ENCODE measurements at regions of chr16 and their contacts with region 1.

Region 1: DNA sequence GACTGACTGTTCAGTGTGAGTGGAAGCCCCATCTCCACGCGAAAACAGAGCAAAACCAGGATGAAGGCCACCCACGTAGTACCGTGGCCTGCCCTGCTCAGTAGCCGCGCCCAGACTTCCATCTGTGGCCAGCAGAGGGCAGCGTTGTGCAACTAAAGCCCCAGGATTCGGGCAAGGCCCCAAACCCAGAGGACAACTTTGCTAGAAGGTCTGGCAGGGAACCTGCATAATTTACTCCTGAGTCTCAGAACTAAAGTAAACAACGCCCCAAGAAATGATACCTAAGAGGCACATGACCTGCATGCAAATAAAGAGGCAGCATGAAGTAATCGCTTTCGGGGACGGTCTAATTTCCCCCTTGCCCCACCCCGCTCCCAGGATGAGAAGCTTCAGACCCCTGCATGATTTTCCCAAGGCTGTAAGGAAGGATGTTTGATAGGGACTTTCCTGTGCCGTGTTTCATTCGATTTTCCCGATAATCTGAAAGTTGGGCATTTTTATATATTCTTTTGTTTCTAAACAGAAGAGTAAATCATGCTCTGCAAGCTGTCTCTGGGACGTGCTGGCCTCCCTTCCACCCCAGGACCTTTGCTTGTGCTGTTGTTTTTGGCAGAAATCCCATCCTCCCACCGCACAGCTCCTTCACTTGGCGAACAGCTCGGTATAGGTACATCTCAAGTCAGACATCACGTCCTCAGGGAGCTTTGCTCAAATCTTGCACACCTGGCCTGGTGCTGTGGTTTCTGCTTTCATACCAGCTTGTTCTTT is 18.6 kb downstream of the HSBP1 start:
- DNase-seq: peak; percentile 84 to 94
- ATAC-seq: peak; percentile 92 to 99 (median 96)
- H3K4me3 ChIP-seq: no peak overlapping the region
- H3K27ac ChIP-seq: peak overlapping the region; percentile 38
- H3K4me1 ChIP-seq: no peaks in the 10 kb centered on the region
- H3K27me3 ChIP-seq: no peaks in the 10 kb centered on the region
- CTCF ChIP-seq: peak; percentile 97

Region 2: DNA sequence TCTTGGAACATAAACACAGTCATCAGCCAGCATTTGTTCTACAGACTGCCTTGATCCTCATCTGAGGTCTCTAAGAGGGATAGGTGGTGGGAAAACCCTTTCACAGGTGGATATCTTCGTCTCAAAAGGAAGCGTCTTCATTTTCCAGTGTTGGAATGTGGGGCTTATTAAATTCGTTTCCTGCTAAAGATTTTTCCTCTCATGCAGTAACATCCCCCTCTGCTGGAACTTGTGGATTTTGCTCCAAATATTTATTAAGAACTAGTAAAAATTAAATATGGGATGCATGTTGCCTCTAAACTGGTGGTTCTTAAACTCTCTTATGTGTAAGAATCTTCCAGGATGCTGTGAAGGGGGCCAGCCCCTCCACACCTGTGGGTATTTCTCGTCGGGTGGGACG is 52.5 kb after region 1 on chr16:
- intact Hi-C with region 1: loop called in 1 of 2 experiments (anchors 1 kb)
- DNase-seq: no peak
- ATAC-seq: no peak
- H3K4me3 ChIP-seq: no peak overlapping the region
- H3K27ac ChIP-seq: no peak overlapping the region
- H3K4me1 ChIP-seq: no peaks in the 10 kb centered on the region
- H3K27me3 ChIP-seq: no peaks in the 10 kb centered on the region
- CTCF ChIP-seq: peak; percentile 32

Region 3: DNA sequence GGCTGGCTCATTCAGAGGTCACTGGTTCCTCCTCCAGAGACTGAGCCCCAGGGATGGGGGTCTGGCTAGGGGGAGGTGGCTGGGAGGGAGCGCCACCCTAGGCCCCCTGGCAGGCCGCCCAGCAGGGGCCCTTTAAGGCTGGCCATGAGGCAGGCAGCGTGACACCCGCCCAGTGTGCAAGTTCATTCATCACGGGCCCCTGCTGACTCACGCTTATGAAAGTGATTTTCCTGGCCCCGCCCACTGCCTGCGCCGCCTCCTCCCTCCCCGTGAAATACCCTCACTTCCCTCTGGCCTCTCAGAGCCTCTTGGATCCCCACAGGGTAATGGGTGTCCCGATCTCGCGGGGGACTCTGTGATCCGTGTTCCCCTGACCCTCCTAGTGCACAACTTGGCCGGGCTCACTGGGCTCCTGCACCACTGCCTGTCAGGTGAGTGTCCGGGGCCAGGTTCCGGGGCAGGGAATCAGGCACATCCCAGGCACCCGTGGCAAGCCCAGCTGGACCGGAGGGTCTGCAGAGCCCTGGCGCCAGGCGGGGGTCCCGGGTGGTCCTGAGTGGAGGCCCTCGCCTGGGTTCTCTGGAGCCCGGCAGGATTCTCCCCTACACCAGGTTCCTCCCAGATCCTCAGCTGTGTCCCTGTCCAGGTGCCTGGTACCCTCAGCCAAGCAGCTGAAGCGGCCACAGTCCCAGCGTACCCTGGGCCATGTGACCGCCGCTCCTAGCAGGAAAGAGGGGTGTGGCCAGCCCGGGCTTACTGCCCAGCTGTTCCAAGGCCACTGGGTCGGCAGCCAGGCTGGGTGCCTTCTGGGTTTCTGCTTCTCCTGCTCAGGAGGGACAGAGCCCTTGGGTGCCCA is 126.8 kb after region 1 on chr16 and contains the start of gene OSGIN1:
- intact Hi-C with region 1: loop called in 1 of 2 experiments (anchors 5 kb)
- DNase-seq: peak; percentile 95 to 97
- ATAC-seq: peak; percentile 87 to 92 (median 90)
- H3K4me3 ChIP-seq: peak within 1 kb of the TSS; percentile 78
- H3K27ac ChIP-seq: peak within 1 kb of the TSS; percentile 96
- H3K4me1 ChIP-seq: peaks cover 29% of the 10 kb centered on the region
- H3K27me3 ChIP-seq: no peaks in the 10 kb centered on the region
- CTCF ChIP-seq: no peak
- total RNA-seq, gene OSGIN1: 10.4 to 33.7 (median 24.9) TPM

Region 4: DNA sequence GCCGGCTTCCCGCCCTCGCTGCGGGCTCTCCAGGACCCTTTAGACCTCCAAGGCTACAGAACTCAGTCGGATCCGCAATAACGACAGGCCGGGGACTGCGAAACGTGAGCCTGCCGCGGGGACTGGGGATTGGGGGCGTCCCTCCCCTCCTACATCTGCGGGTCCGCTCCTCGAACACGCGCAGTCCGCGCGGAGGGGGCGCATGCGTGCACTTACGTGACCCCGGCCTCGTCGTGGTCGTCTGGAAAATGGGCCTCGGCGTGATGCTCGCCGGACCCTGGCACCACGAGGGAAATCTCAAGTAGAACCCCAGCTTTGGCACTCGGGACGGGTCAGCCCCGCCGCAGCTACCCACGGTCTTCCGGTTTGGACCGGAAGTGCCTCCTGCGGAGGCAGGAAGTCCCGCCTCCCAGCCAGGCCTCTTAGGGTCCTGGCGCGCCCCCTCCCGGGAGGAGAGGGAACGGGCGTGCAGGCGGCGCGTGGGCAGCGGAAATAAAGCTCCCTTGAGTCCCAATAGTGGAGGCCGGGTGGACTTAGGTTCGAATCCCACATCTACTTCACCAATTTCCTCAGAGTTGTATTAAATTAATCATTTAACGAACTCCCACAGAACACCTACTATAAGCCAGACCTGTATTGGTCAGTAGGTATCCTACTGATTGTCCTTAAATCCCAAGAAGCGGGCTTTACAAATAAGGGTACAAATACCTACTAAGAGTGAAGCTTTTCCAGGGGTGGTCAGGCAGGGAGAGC is 360.5 kb after region 1 on chr16 and contains the start of gene TAF1C:
- intact Hi-C with region 1: loop called in 1 of 2 experiments (anchors 5 kb)
- DNase-seq: peak; percentile 93 to 96
- ATAC-seq: peak; percentile 98 to 100 (median 99)
- H3K4me3 ChIP-seq: peak within 1 kb of the TSS; percentile 83
- H3K27ac ChIP-seq: peak within 1 kb of the TSS; percentile 77
- H3K4me1 ChIP-seq: peaks cover 11% of the 10 kb centered on the region
- H3K27me3 ChIP-seq: no peaks in the 10 kb centered on the region
- CTCF ChIP-seq: peak; percentile 92
- total RNA-seq, gene TAF1C: 8.3 to 22.3 (median 16.3) TPM

Region 5: GRCh38 chr16:84504420-84505248 is 678.3 kb after region 1 on chr16 and contains the start of gene MEAK7:
- intact Hi-C with region 1: loop called in 1 of 2 experiments (anchors 10 kb)
- DNase-seq: peak; percentile 99
- ATAC-seq: peak; percentile 98 to 99 (median 98)
- H3K4me3 ChIP-seq: peak within 1 kb of the TSS; percentile 74
- H3K27ac ChIP-seq: peak within 1 kb of the TSS; percentile 92
- H3K4me1 ChIP-seq: peaks cover 12% of the 10 kb centered on the region
- H3K27me3 ChIP-seq: no peaks in the 10 kb centered on the region
- CTCF ChIP-seq: peak; percentile 7
- total RNA-seq, gene MEAK7: 2.2 to 7.1 (median 3.6) TPM

Measured in psoas muscle (tissue), 8 donors.